ENCODE measurements at regions of chr1 and their contacts with region 1.

Region 1: DNA sequence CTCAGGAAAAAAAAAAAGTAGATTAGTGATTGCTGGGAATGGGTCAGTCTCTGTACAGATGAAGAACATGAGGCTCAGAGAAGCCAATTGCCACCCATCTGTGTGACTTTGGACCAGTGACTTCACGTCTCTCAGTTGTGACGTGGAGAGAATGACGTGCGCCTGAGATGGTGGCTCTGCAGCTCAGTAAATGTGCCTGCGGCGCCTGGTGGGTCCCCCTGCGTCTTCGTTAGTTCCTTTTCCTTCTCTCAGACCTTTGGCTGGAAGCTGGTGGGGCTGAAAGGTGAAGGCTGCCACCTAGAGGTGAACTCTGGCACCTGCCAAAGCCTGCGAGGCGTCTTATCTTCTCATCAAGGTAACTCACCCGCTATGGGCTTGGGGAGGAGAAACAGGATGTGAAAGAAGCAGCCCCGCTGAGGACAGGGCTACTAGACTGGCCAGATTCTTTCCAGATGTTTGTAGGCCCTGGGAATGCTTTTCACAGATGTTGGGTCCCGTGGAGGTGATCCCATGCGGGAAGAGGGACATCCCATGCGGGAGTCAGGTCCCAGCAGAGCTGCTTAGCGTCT is 8.7 kb upstream of the E2F2 start:
- DNase-seq: peak; percentile 88

Region 2: DNA sequence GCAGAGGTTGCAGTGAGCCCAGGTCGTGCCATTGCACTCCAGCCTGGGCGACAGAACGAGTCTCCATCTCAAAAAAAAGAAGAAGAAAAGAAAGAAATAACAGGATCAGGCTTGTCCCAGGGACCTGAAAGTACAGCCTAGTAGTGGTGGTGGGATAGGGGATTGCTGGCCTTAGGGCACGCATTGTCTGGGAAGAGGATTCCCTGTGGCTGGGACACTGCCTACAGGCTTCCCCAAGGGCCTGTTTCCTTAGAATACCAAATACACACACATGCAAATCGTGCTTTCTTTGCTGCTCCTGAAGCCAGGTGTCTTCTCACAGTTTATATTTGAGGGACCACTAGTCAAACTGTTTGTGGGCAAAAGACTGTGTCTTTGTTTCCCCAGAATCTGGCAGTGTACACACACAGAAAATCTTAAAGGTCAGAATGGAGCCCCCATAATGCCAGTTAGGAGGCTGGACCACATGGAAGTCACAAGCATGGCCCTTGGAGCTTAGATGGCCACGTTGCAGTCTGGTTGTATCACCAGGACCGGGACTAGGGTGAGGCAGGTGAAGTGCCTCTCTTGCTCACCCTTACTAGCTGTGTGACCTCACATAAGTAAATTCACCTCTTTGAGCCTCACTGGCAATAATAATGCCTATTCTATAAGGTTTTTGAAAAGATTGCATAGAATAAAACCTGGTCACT is 43.1 kb before region 1 on chr1:
- CTCF ChIA-PET with region 1: interaction called, 43 read pairs
- POLR2A ChIA-PET with region 1: interaction called, 15 read pairs
- DNase-seq: no peak

Region 3: DNA sequence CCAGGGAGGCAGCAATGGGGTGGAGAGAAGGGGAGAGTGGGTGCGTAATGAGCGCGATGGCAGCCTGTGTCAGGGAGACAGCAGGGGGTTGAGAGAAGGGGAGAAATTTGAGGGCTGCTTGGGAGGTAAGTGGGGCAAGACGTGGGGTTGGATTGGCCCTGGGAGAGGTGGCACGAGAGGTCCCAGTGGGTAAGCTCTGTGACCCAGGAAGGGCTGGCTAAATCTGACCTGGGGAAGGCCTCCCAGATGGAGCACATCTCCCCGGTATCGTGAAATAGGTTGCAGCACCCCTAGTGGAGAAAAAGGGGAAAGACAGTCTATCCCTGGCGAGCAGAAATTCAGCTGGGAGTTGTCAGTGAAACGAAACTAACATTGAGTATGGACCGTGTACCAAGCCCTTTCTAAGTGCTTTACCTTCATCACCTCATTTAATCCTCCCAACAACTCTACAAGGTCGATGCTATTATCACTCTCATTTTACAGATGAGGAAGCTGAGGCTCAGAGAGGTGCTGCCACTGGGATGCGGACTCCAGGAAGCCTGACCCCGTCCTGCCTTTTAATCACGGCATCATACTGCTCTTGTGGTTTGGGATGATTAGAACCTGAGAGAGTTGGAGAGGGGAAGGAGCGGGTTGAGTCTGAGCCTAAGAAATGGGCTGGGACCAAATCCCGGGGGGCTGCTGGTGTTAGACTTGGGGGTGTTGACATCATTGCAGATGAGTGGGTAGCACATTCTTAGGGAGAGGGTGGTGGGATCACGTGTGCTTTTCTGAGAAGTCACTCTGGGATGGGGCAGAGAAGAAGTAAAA is 95.3 kb after region 1 on chr1:
- CTCF ChIA-PET with region 1: interaction called, 51 read pairs
- POLR2A ChIA-PET with region 1: no interaction called
- DNase-seq: peak; percentile 82

Region 4: DNA sequence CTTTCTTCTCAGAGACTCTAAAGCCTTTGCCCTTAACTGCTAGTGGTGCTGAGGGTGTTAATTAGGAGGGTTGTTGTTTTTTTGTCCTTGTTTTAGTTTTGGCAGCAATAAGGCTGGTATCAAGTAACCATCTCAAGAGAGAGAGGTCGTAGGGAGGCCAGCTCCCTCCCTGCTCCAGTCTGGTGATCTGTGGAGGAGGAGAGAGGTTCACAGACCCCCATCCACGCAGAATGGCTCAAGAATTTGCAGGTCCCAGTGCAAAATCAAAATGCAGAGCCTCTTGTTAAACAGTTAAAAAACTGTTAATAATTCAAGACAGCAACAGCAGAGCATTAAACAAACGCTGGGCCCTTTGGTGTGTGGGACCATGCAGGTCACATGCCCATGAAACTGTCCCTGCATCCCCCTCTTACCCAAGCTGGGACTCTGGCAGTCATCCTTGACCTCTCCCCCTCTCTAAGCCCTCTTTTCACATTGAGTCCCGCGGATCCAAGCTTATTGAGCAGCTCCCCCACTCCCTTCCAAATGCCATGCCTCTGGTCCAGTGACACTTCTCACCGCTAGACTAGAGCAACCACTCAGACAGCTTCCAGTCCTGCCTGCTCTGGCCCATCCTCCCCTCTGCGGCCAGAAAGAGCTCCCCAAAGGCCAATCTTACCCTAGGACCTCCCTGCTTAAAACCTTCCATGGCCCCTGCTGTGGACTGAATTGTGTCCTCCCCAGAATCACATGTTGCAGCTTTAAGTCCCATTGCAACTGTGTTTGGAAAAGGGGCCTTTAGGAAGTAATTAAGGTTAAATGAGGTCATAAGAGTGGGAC is 104.2 kb after region 1 on chr1:
- CTCF ChIA-PET with region 1: interaction called, 10 read pairs
- POLR2A ChIA-PET with region 1: no interaction called
- DNase-seq: no peak

Measured in HEK293T (cell line).